Activated T-helper 1 cell treated with anti-CD3 and anti-CD28 coated beads, Interleukin-12 subunit alpha, Interleukin-12 subunit beta, Interleukin-2, Interleukin-4 antibody, amounts not matched to agents 30 ng/mL and 10 ng/mL and 1 ng/mL, durations not matched to agents 14 hours and 24 hours and 36 hours (primary cell): ENCODE measurements at regions of chr4 and their contacts with region 1.

Region 1: DNA sequence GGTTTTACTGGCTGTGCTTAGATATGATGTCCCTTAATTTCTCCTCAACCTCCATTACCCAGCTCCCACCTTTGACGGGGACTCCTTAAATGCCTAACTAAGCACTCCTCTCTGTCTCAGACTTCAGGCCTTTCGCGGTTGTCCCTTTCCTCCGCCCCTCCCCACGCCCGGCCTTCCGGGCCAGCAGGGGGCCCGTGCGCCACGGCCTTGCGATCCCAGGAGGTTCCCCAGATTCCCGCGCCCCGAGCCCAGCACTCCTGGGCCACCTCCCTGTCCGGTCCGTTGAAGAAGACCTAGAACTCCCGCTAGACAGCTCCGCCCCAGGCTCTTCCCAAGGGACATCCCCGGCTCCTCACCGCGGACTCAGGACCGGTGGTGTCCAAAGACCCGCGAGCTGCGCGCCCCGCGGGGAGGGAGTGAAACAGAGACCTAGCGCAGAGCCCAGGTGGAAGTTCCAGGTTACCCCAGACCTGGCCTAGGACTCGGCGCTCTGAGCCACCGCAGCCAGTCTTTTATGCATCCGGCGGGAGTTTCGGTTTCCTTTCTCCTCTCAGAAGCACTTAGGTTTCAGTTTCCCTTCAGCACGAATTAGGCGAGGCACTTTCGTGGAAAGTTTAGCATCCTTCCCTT is at the start of gene DDX60:
- DNase-seq: peak; percentile 85
- H3K4me3 Mint-ChIP-seq: peak within 1 kb of the TSS; percentile 90
- H3K27ac Mint-ChIP-seq: peak within 1 kb of the TSS; percentile 88
- H3K4me1 Mint-ChIP-seq: peaks cover 60% of the 10 kb centered on the region
- H3K27me3 Mint-ChIP-seq: peaks cover 1% of the 10 kb centered on the region
- total RNA-seq, gene DDX60: 10.6 and 15.2 TPM in 2 replicates

Region 2: GRCh38 chr4:167787231-167787630 is 531.1 kb before region 1 on chr4:
- intact Hi-C with region 1: loop called (anchors 5 kb)
- DNase-seq: no peak
- H3K4me3 Mint-ChIP-seq: no peak overlapping the region
- H3K27ac Mint-ChIP-seq: no peak overlapping the region
- H3K4me1 Mint-ChIP-seq: no peaks in the 10 kb centered on the region
- H3K27me3 Mint-ChIP-seq: no peaks in the 10 kb centered on the region

Region 3: GRCh38 chr4:168551945-168552695 is 233.7 kb after region 1 on chr4:
- intact Hi-C with region 1: no loop called
- DNase-seq: no peak
- H3K4me3 Mint-ChIP-seq: no peak overlapping the region
- H3K27ac Mint-ChIP-seq: no peak overlapping the region
- H3K4me1 Mint-ChIP-seq: no peaks in the 10 kb centered on the region
- H3K27me3 Mint-ChIP-seq: peaks cover 5% of the 10 kb centered on the region

Region 4: GRCh38 chr4:169619959-169620879 is 1301.8 kb after region 1 on chr4 and contains the start of gene CLCN3:
- intact Hi-C with region 1: loop called (anchors 10 kb)
- DNase-seq: peak; percentile 88
- H3K4me3 Mint-ChIP-seq: peak within 1 kb of the TSS; percentile 94
- H3K27ac Mint-ChIP-seq: peak within 1 kb of the TSS; percentile 98
- H3K4me1 Mint-ChIP-seq: peaks cover 67% of the 10 kb centered on the region
- H3K27me3 Mint-ChIP-seq: no peaks in the 10 kb centered on the region
- total RNA-seq, gene CLCN3: 29.4 and 30.2 TPM in 2 replicates

Region 5: GRCh38 chr4:169757575-169758184 is 1439.3 kb after region 1 on chr4 and contains the start of gene HPF1:
- intact Hi-C with region 1: loop called (anchors 1 kb)
- DNase-seq: peak; percentile 92
- H3K4me3 Mint-ChIP-seq: peak within 1 kb of the TSS; percentile 93
- H3K27ac Mint-ChIP-seq: peak within 1 kb of the TSS; percentile 69
- H3K4me1 Mint-ChIP-seq: peaks cover 32% of the 10 kb centered on the region
- H3K27me3 Mint-ChIP-seq: peaks cover 2% of the 10 kb centered on the region
- total RNA-seq, gene HPF1: 21.5 and 23.4 TPM in 2 replicates